Activated CD4-positive, alpha-beta T cell treated with anti-CD3 and anti-CD28 coated beads, Interleukin-2, amount 10 ng/mL, durations not matched to agents 7 days and 5 days (primary cell): ENCODE measurements at regions of chr1 and their contacts with region 1.

Region 1: GRCh38 chr1:212035123-212035834 is at the starts of genes DTL and INTS7:
- DNase-seq: peak; percentile 99
- H3K4me3 Mint-ChIP-seq: peak within 1 kb of the TSS; percentile 94
- H3K27ac Mint-ChIP-seq: peak within 1 kb of the TSS; percentile 97
- H3K4me1 Mint-ChIP-seq: peaks cover 64% of the 10 kb centered on the region
- H3K27me3 Mint-ChIP-seq: no peaks in the 10 kb centered on the region
- total RNA-seq, gene DTL: 64.9 to 72.1 TPM
- total RNA-seq, gene INTS7: 29.9 to 34.8 TPM

Region 2: DNA sequence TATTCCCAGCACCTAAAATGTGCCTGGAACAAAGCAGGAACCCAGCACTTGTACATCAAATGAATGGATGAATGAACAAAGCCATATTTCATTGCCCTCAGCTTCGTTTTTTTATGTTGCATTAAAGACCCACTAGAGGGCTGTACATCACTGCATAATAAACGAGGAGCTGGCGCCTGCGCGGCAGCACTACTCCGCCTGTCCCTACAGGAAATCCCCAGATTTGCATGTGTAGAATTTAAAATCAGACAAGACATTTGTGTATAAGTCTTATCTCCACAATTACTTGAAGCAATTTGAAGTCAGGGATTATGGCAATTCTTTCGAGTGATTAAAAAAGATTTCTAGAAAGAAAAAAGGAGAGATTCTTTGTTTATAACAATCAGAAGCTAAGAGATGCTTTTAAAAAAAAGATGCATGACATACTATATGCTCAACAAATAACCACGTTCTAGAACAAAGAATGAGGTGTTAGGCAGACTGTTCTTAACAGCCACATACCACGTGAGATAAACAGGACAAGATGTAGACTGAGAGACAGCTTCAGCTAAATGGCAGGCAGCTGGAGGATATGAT is 354.4 kb before region 1 on chr1:
- CTCF ChIA-PET with region 1: interaction called, 14 read pairs
- POLR2A ChIA-PET with region 1: interaction called, 8 read pairs
- DNase-seq: peak; percentile 82
- H3K4me3 Mint-ChIP-seq: no peak overlapping the region
- H3K27ac Mint-ChIP-seq: peak overlapping the region; percentile 75
- H3K4me1 Mint-ChIP-seq: peaks cover 16% of the 10 kb centered on the region
- H3K27me3 Mint-ChIP-seq: no peaks in the 10 kb centered on the region

Region 3: DNA sequence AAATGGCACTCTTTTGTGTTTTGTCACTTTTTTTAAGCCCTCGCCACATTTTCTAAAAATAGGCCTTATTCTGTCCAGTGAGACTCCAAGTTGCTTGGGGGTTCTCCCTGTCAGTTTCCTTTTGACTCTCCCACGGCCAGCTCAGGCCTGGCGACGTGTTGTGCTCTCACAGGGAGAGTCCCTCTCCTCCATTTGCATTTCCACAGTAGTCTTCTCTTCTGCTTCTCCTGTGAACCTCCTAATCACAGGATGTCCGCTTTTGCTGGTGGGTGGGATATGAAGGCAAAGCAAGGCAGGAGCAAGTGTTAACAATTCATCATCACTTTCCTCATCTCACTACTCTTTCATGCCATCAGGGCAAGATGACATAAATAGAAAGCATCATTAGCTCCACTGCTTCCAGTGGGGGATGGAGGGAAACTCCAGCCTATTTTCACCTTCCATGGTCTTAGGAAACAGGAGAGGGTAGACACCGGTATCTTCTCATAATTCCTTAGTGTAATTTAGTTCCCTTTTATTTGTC is 99.8 kb before region 1 on chr1:
- CTCF ChIA-PET with region 1: no interaction called
- POLR2A ChIA-PET with region 1: no interaction called
- DNase-seq: peak; percentile 14
- H3K4me3 Mint-ChIP-seq: no peak overlapping the region
- H3K27ac Mint-ChIP-seq: no peak overlapping the region
- H3K4me1 Mint-ChIP-seq: peaks cover 46% of the 10 kb centered on the region
- H3K27me3 Mint-ChIP-seq: no peaks in the 10 kb centered on the region

Region 4: DNA sequence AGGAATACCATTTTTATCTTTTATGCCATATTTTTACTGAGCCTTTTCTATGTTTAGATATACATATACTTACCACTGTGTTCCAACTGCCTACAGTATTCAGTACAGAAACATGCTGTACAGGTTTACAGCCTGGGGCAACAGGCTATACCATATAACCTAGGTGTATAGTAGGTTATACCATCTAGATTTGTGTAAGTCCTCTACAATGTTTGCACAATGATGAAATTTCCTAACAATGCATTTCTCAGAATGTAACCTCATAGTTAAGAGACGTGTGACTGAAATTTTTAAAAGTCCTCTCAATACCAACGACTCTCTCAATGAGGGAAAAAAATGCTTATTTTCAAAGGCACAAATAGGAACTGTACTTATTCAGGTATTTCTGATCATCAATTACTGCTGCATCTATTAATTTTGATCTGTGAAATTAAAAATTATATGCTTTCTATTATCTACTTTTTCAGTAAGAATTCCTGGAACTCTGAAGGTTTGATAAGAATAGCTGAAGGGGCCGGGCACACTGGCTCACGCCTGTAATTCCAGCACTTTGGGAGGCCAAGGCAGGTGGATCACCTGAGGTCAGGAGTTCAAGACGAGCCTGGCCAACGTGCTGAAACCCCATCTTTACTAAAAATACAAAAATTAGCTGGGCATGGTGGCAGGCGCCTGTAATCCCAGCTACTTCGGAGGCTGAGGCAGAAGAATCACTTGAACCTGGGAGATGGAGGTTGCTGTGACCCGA is 21.4 kb before region 1 on chr1:
- CTCF ChIA-PET with region 1: interaction called, 10 read pairs
- POLR2A ChIA-PET with region 1: no interaction called
- DNase-seq: no peak
- H3K4me3 Mint-ChIP-seq: no peak overlapping the region
- H3K27ac Mint-ChIP-seq: no peak overlapping the region
- H3K4me1 Mint-ChIP-seq: no peaks in the 10 kb centered on the region
- H3K27me3 Mint-ChIP-seq: no peaks in the 10 kb centered on the region

Region 5: GRCh38 chr1:212021563-212021962 is 13.7 kb before region 1 on chr1:
- CTCF ChIA-PET with region 1: interaction called, 14 read pairs
- POLR2A ChIA-PET with region 1: no interaction called
- DNase-seq: no peak
- H3K4me3 Mint-ChIP-seq: no peak overlapping the region
- H3K27ac Mint-ChIP-seq: no peak overlapping the region
- H3K4me1 Mint-ChIP-seq: peaks cover 2% of the 10 kb centered on the region
- H3K27me3 Mint-ChIP-seq: no peaks in the 10 kb centered on the region

Region 6: GRCh38 chr1:212045981-212046380 is 10.7 kb after region 1 on chr1:
- CTCF ChIA-PET with region 1: interaction called, 12 read pairs
- POLR2A ChIA-PET with region 1: interaction called, 3 read pairs
- DNase-seq: no peak
- H3K4me3 Mint-ChIP-seq: no peak overlapping the region
- H3K27ac Mint-ChIP-seq: no peak overlapping the region
- H3K4me1 Mint-ChIP-seq: peaks cover 19% of the 10 kb centered on the region
- H3K27me3 Mint-ChIP-seq: no peaks in the 10 kb centered on the region

Region 7: DNA sequence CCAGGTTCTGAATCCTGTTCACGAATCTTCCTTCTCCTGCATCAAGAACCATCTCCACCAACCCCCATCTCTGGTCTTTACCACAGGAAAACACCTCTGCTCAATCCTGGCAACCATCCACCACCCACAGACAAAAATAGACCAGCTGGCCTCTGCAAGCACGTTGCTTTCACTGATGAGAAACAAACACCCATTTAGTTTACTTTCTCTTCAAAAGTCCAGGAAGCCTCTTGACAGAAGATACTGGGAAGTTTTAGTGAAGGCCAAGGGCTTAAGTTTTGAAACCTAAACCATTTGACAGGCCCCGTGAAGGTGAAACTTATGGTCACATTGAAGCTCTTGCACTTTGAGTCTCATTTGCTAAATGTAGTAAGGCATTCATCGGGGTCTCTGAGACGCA is 127.4 kb after region 1 on chr1:
- CTCF ChIA-PET with region 1: no interaction called
- POLR2A ChIA-PET with region 1: no interaction called
- DNase-seq: peak; percentile 37
- H3K4me3 Mint-ChIP-seq: no peak overlapping the region
- H3K27ac Mint-ChIP-seq: peak overlapping the region; percentile 70
- H3K4me1 Mint-ChIP-seq: peaks cover 42% of the 10 kb centered on the region
- H3K27me3 Mint-ChIP-seq: no peaks in the 10 kb centered on the region

Region 8: GRCh38 chr1:212218911-212219310 is 183.6 kb after region 1 on chr1:
- CTCF ChIA-PET with region 1: no interaction called
- POLR2A ChIA-PET with region 1: no interaction called
- DNase-seq: no peak
- H3K4me3 Mint-ChIP-seq: no peak overlapping the region
- H3K27ac Mint-ChIP-seq: no peak overlapping the region
- H3K4me1 Mint-ChIP-seq: peaks cover 12% of the 10 kb centered on the region
- H3K27me3 Mint-ChIP-seq: peaks cover 4% of the 10 kb centered on the region

Region 9: DNA sequence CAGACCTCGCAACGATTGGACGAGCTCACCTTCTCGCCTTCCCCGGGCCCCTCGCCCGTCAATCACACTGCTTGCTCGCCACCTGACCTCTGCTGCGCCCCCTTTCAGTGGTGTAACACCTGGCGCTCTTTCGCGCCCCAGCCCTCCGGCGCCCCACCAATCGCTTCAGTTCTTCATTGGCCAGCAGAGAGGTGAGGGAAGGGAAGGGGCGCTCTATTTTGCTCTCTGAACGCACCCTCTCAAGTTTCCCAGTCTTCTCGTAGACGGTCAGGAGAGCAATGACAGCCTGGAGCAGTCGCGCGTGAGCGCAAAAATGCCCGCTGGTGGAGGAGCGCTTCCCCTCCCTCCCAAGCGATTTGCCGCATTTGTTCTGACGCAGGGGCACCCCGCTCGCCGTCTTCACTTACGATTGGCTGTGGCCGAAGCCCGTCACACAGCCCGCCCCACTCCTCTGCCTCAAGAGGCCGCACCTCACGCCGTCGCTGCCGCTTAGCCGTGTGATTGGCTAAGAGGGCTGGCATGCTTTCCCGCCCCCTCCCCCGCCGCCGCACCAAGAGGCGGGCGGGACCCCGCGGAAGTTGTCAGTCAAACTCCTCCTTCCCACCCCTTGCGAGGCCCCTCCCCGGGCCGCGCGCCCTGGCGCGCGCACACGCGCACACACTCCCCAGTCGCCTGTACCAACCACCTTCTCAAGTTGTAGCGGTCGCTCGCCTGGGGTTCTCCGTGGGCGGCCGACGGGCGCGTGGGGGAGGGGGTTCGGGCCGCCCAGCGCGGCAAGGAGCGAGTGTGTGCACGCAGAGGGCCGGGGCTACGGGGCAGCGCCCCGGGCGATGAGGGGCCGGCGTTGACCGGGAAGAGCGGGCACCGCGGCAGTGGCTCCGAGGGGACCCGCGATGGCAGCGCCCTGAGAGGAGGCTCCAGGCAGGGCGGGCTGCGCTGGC is 249.7 kb after region 1 on chr1 and contains the start of gene PPP2R5A:
- CTCF ChIA-PET with region 1: interaction called, 16 read pairs
- POLR2A ChIA-PET with region 1: no interaction called
- DNase-seq: peak; percentile 98
- H3K4me3 Mint-ChIP-seq: peak within 1 kb of the TSS; percentile 100
- H3K27ac Mint-ChIP-seq: peak within 1 kb of the TSS; percentile 99
- H3K4me1 Mint-ChIP-seq: peaks cover 43% of the 10 kb centered on the region
- H3K27me3 Mint-ChIP-seq: peaks cover 10% of the 10 kb centered on the region
- total RNA-seq, gene PPP2R5A: 59.9 to 63.9 TPM

Region 10: DNA sequence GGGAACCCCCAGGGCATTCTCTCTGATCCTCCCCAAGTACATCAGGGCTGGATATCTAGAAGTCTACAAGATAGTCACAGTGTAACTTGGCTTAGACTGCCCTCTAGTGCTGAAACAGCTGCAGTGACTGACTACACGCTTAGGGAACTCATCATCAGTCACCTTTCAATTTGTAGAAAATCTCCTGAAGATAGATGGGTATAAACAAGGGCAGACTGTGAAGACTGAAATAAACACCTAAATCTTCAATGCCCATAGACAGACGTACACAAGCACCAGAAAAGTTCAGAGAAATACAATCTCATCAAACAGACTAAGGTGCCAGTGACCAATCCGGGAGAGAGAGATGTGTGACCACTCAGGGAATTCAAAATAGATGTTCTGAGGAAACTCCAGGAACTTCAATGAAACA is 332.8 kb after region 1 on chr1:
- CTCF ChIA-PET with region 1: interaction called, 11 read pairs
- POLR2A ChIA-PET with region 1: no interaction called
- DNase-seq: peak; percentile 78
- H3K4me3 Mint-ChIP-seq: no peak overlapping the region
- H3K27ac Mint-ChIP-seq: no peak overlapping the region
- H3K4me1 Mint-ChIP-seq: peaks cover 3% of the 10 kb centered on the region
- H3K27me3 Mint-ChIP-seq: no peaks in the 10 kb centered on the region